ENCODE measurements at regions of chr11 and their contacts with region 1.

Region 1: GRCh38 chr11:126310228-126310991 is 6.5 kb downstream of the DCPS start:
- DNase-seq: peak; percentile 65 to 73
- H3K4me3 ChIP-seq: no peak overlapping the region
- H3K27ac ChIP-seq: no peak overlapping the region
- H3K4me1 ChIP-seq: peaks cover 3% of the 10 kb centered on the region; the same call in 1 of the 2 replicates
- H3K27me3 ChIP-seq: no peaks in the 10 kb centered on the region
- CTCF ChIP-seq: peak; percentile 94

Region 2: DNA sequence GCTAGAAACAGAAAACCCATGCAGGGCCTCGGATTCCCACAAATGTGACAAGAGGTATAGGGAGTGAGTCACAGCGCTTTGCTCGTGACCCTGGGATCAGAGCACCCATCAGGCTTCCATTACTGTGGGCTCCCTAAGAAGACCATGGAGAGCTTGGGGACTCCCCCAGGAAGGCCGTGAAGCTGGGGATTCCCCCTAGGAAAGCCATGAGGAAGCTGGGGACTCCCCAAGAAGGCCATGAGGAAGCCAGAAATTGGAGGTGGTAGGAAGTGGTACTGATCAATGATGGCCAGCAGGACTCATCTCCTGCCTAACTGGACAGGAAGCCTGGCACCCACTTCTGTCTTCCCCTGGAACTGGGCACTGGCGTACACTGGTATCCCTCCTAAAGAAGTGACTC is 16.7 kb before region 1 on chr11:
- CTCF ChIA-PET with region 1: no interaction called
- POLR2A ChIA-PET with region 1: no interaction called
- intact Hi-C with region 1: no loop called
- DNase-seq: no peak
- H3K4me3 ChIP-seq: no peak overlapping the region
- H3K27ac ChIP-seq: no peak overlapping the region
- H3K4me1 ChIP-seq: no peaks in the 10 kb centered on the region
- H3K27me3 ChIP-seq: no peaks in the 10 kb centered on the region
- CTCF ChIP-seq: no peak

Region 3: DNA sequence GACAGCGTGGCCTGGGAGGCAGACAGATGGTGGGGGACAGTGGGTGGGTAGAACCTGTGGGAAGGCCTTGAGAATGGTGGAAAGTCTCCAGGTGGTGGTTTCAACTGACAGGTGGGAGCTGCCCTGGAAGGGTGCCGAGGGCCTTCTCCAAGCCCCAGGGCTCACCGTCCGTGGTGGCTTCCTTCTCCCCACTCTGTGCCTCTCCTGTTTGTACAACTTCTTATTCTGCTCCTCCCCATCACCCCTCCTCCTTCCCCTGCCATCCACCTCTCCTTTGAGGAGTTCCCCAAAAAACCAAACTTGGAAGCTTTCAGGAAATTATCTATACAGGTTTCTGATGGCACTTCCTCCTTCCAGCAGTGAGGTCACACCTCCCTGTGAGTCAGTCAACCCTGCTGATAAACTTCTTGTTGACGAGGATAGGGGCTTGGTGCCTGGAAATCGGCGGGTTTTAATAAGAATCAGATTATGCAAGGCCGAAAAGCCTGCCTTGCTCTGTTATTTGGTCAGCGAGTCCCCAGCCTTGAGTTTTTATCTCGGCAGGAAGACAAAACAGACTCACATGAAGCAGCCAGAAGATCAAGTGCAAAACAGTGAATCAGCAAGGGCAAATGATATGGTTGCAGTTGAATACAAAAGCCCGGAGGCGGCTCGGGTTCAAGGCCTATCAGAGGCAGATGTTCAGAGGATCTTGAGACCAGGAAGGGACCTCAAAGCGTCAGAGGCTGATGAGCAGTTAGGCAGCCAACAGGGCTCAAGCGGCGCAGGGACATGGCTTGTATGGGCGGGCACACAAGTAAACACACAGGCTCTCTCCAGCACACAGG is 35.6 kb after region 1 on chr11:
- CTCF ChIA-PET with region 1: no interaction called
- POLR2A ChIA-PET with region 1: interaction called, 6 read pairs
- intact Hi-C with region 1: loop called (anchors 2 kb)
- DNase-seq: peak; percentile 62 to 96
- H3K4me3 ChIP-seq: peak overlapping the region; percentile 27; the same call in 1 of the 2 replicates
- H3K27ac ChIP-seq: peak overlapping the region; percentile 90
- H3K4me1 ChIP-seq: peaks cover 97% of the 10 kb centered on the region
- H3K27me3 ChIP-seq: no peaks in the 10 kb centered on the region
- CTCF ChIP-seq: no peak

Region 4: GRCh38 chr11:126403658-126404057 is 93.2 kb after region 1 on chr11:
- CTCF ChIA-PET with region 1: no interaction called
- POLR2A ChIA-PET with region 1: no interaction called
- intact Hi-C with region 1: loop called (anchors 1 kb)
- DNase-seq: peak; percentile 46 to 65
- H3K4me3 ChIP-seq: peak overlapping the region; percentile 22; the same call in 1 of the 2 replicates
- H3K27ac ChIP-seq: peak overlapping the region; percentile 91
- H3K4me1 ChIP-seq: peaks cover 65% of the 10 kb centered on the region
- H3K27me3 ChIP-seq: no peaks in the 10 kb centered on the region
- CTCF ChIP-seq: no peak

Region 5: GRCh38 chr11:126480410-126481302 is 170.2 kb after region 1 on chr11:
- CTCF ChIA-PET with region 1: interaction called, 15 read pairs
- POLR2A ChIA-PET with region 1: no interaction called
- intact Hi-C with region 1: loop called (anchors 1 kb)
- DNase-seq: peak; percentile 60 to 66
- H3K4me3 ChIP-seq: no peak overlapping the region; the same call in 1 of the 2 replicates
- H3K27ac ChIP-seq: no peak overlapping the region
- H3K4me1 ChIP-seq: peaks cover 12% of the 10 kb centered on the region; the same call in 1 of the 2 replicates
- H3K27me3 ChIP-seq: 0 out of 2 replicates have a peak, but pooled peaks cover 3% of the 10 kb centered on the region
- CTCF ChIP-seq: peak; percentile 96

Region 6: DNA sequence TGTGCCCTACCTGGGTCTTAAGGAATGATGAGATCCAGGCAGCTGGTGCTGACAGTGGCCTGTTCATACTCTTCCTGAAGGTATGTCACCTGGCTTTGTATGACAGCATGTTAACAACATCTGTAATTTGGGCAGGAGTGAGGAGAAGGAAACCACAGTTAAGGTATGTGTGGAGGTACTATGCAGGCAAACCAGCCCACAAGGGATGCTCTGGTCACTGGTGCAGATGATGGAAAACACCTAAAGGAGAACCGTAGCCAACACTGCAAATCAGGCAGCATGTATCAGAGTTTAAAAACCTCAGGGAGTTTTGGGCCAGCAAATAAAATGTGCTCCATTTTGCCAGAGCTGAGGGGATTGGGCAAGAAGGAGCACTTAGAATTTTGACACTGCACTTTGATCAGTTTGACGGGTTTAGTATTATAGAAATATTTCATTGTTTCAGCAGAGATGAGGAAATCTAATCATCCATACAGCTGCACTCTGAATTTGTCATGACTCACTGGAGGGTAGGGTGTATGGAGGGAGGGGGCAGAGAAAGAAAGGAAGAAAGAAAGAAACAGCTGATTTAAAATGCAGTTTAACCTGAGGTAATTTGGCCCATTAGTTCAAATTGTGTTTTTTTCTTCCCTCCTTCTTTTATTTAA is 429.2 kb after region 1 on chr11:
- CTCF ChIA-PET with region 1: no interaction called
- POLR2A ChIA-PET with region 1: no interaction called
- intact Hi-C with region 1: no loop called
- DNase-seq: no peak
- H3K4me3 ChIP-seq: no peak overlapping the region
- H3K27ac ChIP-seq: no peak overlapping the region
- H3K4me1 ChIP-seq: no peaks in the 10 kb centered on the region
- H3K27me3 ChIP-seq: peaks cover 62% of the 10 kb centered on the region
- CTCF ChIP-seq: no peak

Region 7: GRCh38 chr11:127074151-127074761 is 763.8 kb after region 1 on chr11:
- CTCF ChIA-PET with region 1: no interaction called
- POLR2A ChIA-PET with region 1: no interaction called
- intact Hi-C with region 1: loop called (anchors 5 kb)
- DNase-seq: peak; percentile 37 to 59
- H3K4me3 ChIP-seq: no peak overlapping the region
- H3K27ac ChIP-seq: no peak overlapping the region
- H3K4me1 ChIP-seq: no peaks in the 10 kb centered on the region
- H3K27me3 ChIP-seq: peaks cover 33% of the 10 kb centered on the region
- CTCF ChIP-seq: no peak; the same call in 1 of the 2 replicates

Measured in PC-9 (cell line).